Naive thymus-derived CD4-positive, alpha-beta T cell (primary cell): ENCODE measurements at regions of chr1 and their contacts with region 1.

Region 1: GRCh38 chr1:231211005-231211857 is 29.8 kb upstream of the GNPAT start:
- DNase-seq: peak; percentile 78 to 91 (median 86)
- ATAC-seq: peak; percentile 94
- H3K4me3 ChIP-seq: peak overlapping the region; percentile 56
- H3K4me3 Mint-ChIP-seq: peak overlapping the region; percentile 29 to 95 (median 90)
- H3K27ac ChIP-seq: peak overlapping the region; percentile 14
- H3K27ac Mint-ChIP-seq: peak overlapping the region; percentile 22 to 90 (median 80)
- H3K4me1 ChIP-seq: peaks cover 4% of the 10 kb centered on the region in 2 donors
- H3K4me1 Mint-ChIP-seq: peaks cover 0 to 12% (median 9%) of the 10 kb centered on the region in 7 donors
- H3K27me3 ChIP-seq: no peaks in the 10 kb centered on the region
- H3K27me3 Mint-ChIP-seq: peaks cover 0 to 5% (median 0%) of the 10 kb centered on the region in 5 donors

Region 2: GRCh38 chr1:229661022-229661877 is 1550.0 kb before region 1 on chr1:
- CTCF ChIA-PET with region 1: no interaction called
- POLR2A ChIA-PET with region 1: no interaction called
- intact Hi-C with region 1: loop called in 1 of 2 experiments (anchors 2 kb)
- DNase-seq: peak; percentile 38 to 72 (median 67)
- ATAC-seq: peak; percentile 87
- H3K4me3 ChIP-seq: no peak overlapping the region
- H3K4me3 Mint-ChIP-seq: no peak overlapping the region
- H3K27ac ChIP-seq: no peak overlapping the region
- H3K27ac Mint-ChIP-seq: peak overlapping the region in 3 of 9 donors; percentile 8 to 80 (median 66)
- H3K4me1 ChIP-seq: peaks cover 13% of the 10 kb centered on the region in 2 donors
- H3K4me1 Mint-ChIP-seq: peaks cover 0 to 11% (median 5%) of the 10 kb centered on the region in 7 donors
- H3K27me3 ChIP-seq: no peaks in the 10 kb centered on the region
- H3K27me3 Mint-ChIP-seq: no peaks in the 10 kb centered on the region

Region 3: GRCh38 chr1:230743899-230744298 is 467.3 kb before region 1 on chr1:
- CTCF ChIA-PET with region 1: no interaction called
- POLR2A ChIA-PET with region 1: no interaction called
- intact Hi-C with region 1: loop called in 1 of 2 experiments (anchors 2 kb)
- DNase-seq: no peak
- ATAC-seq: no peak
- H3K4me3 ChIP-seq: no peak overlapping the region
- H3K4me3 Mint-ChIP-seq: no peak overlapping the region
- H3K27ac ChIP-seq: no peak overlapping the region
- H3K27ac Mint-ChIP-seq: no peak overlapping the region
- H3K4me1 ChIP-seq: no peaks in the 10 kb centered on the region
- H3K4me1 Mint-ChIP-seq: no peaks in the 10 kb centered on the region
- H3K27me3 ChIP-seq: no peaks in the 10 kb centered on the region
- H3K27me3 Mint-ChIP-seq: peaks cover 6 to 28% (median 17%) of the 10 kb centered on the region in 5 donors

Region 4: GRCh38 chr1:230867903-230868735 is 343.1 kb before region 1 on chr1 and contains the start of gene C1orf198:
- CTCF ChIA-PET with region 1: no interaction called
- POLR2A ChIA-PET with region 1: no interaction called
- intact Hi-C with region 1: loop called in 1 of 2 experiments (anchors 1 kb)
- DNase-seq: peak; percentile 48 to 84 (median 69)
- ATAC-seq: peak; percentile 97
- H3K4me3 ChIP-seq: peak within 1 kb of the TSS; percentile 76
- H3K4me3 Mint-ChIP-seq: peak within 1 kb of the TSS; percentile 70 to 94 (median 88)
- H3K27ac ChIP-seq: peak within 1 kb of the TSS; percentile 67
- H3K27ac Mint-ChIP-seq: peak within 1 kb of the TSS in 8 of 9 donors; percentile 29 to 84 (median 62)
- H3K4me1 ChIP-seq: peaks cover 0 to 5% of the 10 kb centered on the region in 2 donors
- H3K4me1 Mint-ChIP-seq: peaks cover 10 to 33% (median 24%) of the 10 kb centered on the region in 7 donors
- H3K27me3 ChIP-seq: peaks cover 0 to 7% of the 10 kb centered on the region in 2 donors
- H3K27me3 Mint-ChIP-seq: peaks cover 13 to 38% (median 25%) of the 10 kb centered on the region in 5 donors
- total RNA-seq, gene C1orf198: 2.9 to 6.0 (median 3.7) TPM

Region 5: GRCh38 chr1:230922620-230923019 is 288.6 kb before region 1 on chr1:
- CTCF ChIA-PET with region 1: interaction called, 10 read pairs
- POLR2A ChIA-PET with region 1: no interaction called
- intact Hi-C with region 1: loop called (anchors 1 kb)
- DNase-seq: no peak
- ATAC-seq: no peak
- H3K4me3 ChIP-seq: no peak overlapping the region
- H3K4me3 Mint-ChIP-seq: no peak overlapping the region
- H3K27ac ChIP-seq: peak overlapping the region; percentile 3
- H3K27ac Mint-ChIP-seq: peak overlapping the region in 4 of 9 donors; percentile 7 to 76 (median 66)
- H3K4me1 ChIP-seq: no peaks in the 10 kb centered on the region
- H3K4me1 Mint-ChIP-seq: peaks cover 0 to 6% (median 0%) of the 10 kb centered on the region in 7 donors
- H3K27me3 ChIP-seq: no peaks in the 10 kb centered on the region
- H3K27me3 Mint-ChIP-seq: no peaks in the 10 kb centered on the region

Region 6: DNA sequence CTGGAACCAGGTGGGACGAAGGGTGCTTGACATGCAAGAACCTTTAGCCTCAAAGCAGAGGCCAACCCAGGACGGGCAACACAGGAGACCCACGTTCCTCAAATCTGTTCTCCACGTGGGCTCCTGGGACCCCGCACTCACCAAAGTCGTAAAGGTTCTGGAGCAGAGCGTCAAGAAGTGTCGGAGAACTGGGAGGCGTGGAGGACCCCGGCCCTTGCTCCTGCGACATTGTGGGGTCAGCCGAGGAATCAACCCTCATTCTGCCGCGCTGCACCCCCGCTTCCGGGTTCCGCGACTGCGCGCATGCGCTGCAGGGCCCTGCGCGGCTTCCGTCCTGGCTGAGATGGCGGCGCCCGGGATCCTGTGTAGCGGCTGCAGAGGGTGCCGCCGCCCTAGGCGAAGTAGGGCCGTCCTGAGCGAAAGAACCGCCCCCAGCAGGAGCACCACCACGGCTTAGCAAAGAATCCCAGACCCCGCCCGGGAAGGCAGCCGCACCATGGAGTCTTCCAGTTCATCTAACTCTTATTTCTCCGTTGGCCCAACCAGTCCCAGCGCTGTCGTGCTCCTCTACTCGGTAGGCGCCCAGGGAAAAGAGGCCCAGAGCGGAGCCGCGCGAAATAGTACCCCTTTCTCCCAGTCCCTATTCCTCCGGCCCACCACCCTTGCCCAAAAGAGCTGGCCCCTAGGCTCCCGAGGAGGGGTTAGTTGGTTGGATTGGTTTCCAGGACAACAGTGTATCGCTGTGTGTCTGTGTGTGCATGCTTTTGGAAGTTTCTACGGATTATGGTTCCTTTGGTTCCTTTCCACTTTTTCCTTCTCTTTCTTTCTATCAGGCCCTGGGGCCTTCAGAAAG is 29.9 kb after region 1 on chr1 and contains the start of gene GNPAT:
- CTCF ChIA-PET with region 1: interaction called, 5 read pairs
- POLR2A ChIA-PET with region 1: no interaction called
- intact Hi-C with region 1: loop called in 1 of 2 experiments (anchors 1 kb)
- DNase-seq: peak; percentile 86 to 97 (median 92)
- ATAC-seq: peak; percentile 98
- H3K4me3 ChIP-seq: peak within 1 kb of the TSS; percentile 98
- H3K4me3 Mint-ChIP-seq: peak within 1 kb of the TSS; percentile 90 to 99 (median 95)
- H3K27ac ChIP-seq: peak within 1 kb of the TSS; percentile 93
- H3K27ac Mint-ChIP-seq: peak within 1 kb of the TSS; percentile 92 to 99 (median 97)
- H3K4me1 ChIP-seq: peaks cover 17 to 44% of the 10 kb centered on the region in 2 donors
- H3K4me1 Mint-ChIP-seq: peaks cover 47 to 86% (median 76%) of the 10 kb centered on the region in 7 donors
- H3K27me3 ChIP-seq: no peaks in the 10 kb centered on the region
- H3K27me3 Mint-ChIP-seq: no peaks in the 10 kb centered on the region
- total RNA-seq, gene GNPAT: 17.3 to 41.0 (median 35.5) TPM